ENCODE measurements at regions of chr4 and their contacts with region 1.

Region 1: DNA sequence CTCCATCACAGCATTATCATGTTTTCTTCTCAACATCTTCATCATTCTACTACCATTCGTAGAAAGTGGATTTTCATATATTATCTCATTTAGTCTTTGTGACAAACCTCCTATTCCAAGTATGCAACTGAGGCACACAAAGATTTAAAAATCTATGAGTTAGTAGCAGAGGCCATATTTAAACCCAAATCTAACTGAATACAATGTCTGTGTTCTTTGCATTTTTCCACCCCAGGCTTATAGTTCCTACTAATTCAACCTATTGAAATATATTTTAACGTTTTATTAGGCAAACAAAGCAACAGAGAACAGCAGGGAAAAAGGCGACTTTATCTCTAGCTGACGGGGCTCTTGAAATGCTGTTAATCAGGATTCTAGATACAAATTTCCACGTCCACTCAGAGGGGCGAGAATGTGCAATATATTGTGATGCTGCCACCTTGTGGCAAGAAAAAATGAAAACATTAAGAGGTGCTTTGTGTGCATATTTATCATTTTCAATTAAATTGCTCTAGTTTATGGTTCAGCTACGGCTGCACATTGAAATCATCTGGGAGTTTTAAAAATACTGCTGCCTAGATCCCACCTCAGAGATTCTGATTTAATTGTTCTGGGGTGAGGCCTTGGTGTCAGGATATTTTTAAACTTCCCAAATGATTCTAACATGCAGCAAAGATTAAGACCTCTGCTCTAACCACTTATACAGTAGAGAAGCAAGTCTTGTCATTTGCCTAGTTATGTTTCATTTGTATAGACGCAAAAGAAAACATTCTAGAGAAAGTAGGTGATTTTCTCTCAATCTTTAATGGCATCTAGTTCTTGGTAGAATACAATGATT is 315.9 kb downstream of the MAPK10 start:
- DNase-seq: no peak
- ATAC-seq: peak; percentile 61

Region 2: GRCh38 chr4:85084380-85085094 is 959.4 kb before region 1 on chr4:
- intact Hi-C with region 1: loop called (anchors 10 kb)
- DNase-seq: no peak
- ATAC-seq: peak; percentile 66

Region 3: GRCh38 chr4:85756938-85757337 is 287.0 kb before region 1 on chr4:
- intact Hi-C with region 1: loop called (anchors 10 kb)
- DNase-seq: no peak
- ATAC-seq: peak; percentile 70

Region 4: GRCh38 chr4:86014599-86014998 is 29.4 kb before region 1 on chr4:
- intact Hi-C with region 1: no loop called
- DNase-seq: no peak
- ATAC-seq: no peak

Region 5: DNA sequence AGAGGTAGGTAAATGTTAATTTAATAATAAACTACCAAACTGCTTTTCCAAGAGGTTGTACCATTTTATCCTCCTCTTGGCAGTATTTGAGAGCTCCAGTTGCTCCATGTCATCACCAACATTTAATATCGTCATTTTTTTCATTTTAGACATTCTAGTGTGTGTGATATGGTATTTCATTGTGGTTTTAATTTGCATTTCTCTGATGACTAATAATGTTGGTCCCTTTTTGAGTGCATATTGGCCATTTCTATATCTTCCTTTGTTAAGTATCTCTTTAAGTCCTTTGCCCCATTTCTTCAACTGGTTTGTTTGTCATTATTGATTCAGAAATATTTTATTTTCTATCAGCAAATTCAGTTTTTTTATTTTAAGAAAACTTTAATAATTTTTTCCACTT is 227.1 kb after region 1 on chr4:
- intact Hi-C with region 1: no loop called
- DNase-seq: no peak
- ATAC-seq: no peak